Esophagus muscularis mucosa (tissue), 4 donors: ENCODE measurements at regions of chr2 and their contacts with region 1.

Region 1: GRCh38 chr2:207219676-207220501 is 54.1 kb upstream of the KLF7 start:
- DNase-seq: peak; percentile 31
- H3K4me3 ChIP-seq: no peak overlapping the region
- H3K27ac ChIP-seq: no peak overlapping the region
- H3K4me1 ChIP-seq: peaks cover 7 to 10% (median 8%) of the 10 kb centered on the region in 4 donors
- H3K27me3 ChIP-seq: no peaks in the 10 kb centered on the region
- CTCF ChIP-seq: no peak
- EP300 ChIP-seq: no peak
- POLR2A ChIP-seq: no peak

Region 2: DNA sequence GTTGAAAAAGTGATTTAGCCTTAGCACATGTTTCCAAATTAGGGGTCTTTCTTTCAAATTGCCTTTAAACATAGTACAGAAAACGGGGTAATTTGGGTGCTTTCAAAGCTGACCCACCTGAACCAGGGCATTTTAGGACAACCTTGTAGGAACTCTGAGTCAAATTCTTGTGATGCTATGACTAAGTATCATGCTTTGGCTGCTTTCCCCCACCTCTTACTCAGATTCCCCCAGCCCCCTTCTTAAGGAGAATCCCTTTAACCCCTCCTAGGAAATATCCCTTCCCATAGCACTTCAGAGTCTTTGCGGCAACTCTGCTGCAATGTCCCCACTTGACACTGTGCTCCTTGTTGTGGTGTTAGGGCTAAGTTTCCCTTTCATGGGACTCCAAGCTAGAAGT is 35.5 kb before region 1 on chr2:
- intact Hi-C with region 1: loop called (anchors 5 kb)
- DNase-seq: no peak
- H3K4me3 ChIP-seq: no peak overlapping the region
- H3K27ac ChIP-seq: no peak overlapping the region
- H3K4me1 ChIP-seq: peaks cover 0 to 6% (median 0%) of the 10 kb centered on the region in 4 donors
- H3K27me3 ChIP-seq: no peaks in the 10 kb centered on the region
- CTCF ChIP-seq: no peak
- EP300 ChIP-seq: no peak
- POLR2A ChIP-seq: no peak

Region 3: GRCh38 chr2:207288628-207289027 is 68.7 kb after region 1 on chr2:
- intact Hi-C with region 1: no loop called
- DNase-seq: no peak
- H3K4me3 ChIP-seq: no peak overlapping the region
- H3K27ac ChIP-seq: no peak overlapping the region
- H3K4me1 ChIP-seq: peaks cover 0 to 15% (median 9%) of the 10 kb centered on the region in 4 donors
- H3K27me3 ChIP-seq: no peaks in the 10 kb centered on the region
- CTCF ChIP-seq: no peak
- EP300 ChIP-seq: no peak
- POLR2A ChIP-seq: no peak